ENCODE measurements at regions of chr2 and their contacts with region 1.

Region 1: GRCh38 chr2:207625018-207625907 is at the start of gene METTL21A:
- DNase-seq: peak; percentile 75 to 92 (median 86)
- H3K4me3 ChIP-seq: peak within 1 kb of the TSS; percentile 68 to 99 (median 92)
- H3K27ac ChIP-seq: peak within 1 kb of the TSS; percentile 49 to 99 (median 94)
- H3K27me3 ChIP-seq: no peaks in the 10 kb centered on the region
- CTCF ChIP-seq: peak in 51 of 56 donors; percentile 14 to 73 (median 45)
- total RNA-seq, gene METTL21A: 11.8 to 34.3 (median 18.4) TPM

Region 2: DNA sequence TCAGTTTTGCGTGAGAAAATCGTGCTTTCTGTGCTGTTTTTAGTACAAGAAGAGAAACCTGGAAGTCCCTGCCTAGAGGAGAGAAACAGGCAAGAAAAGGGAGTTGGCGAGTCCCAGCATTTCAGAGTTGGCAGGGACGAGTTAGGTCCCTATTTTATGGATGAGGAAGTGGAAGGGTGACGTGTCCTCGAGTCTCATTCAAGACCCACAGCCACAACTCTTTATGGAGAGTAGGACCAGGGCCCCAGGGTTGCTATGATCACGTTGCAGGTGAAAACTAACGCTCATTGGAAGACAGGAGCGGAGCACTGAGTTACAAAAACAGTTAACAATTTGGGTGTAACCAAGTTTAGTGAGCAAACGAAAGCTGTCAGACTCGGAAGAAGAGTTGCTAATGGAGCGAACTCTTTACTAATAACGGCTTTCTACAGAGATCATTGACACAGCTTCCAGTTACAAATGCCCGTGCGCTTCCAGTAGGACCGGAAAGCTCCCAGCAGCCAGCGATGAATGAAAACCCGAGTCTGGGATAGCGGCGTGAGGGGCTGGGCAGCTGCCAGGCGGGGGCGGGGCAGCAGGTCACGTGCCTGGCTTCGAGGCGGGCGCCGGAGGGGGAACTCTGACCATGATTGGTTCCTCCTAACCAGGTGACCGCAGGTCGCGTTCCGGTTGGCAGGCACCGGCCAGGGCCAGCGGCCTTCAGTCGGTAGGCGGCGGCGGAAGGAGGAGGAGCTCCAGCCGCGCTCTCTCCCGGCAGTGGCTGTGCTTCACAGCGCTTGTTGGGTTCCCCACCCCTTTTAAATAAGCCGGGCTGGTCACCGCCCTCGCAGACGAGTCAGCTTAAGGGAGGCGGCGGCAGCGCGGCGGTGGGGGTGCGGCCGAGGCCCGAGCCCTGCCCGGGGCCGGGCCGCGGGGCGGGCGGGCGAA is 85.8 kb after region 1 on chr2 and contains the start of gene CCNYL1:
- intact Hi-C with region 1: loop called (anchors 2 kb)
- DNase-seq: peak; percentile 98 to 99 (median 99)
- H3K4me3 ChIP-seq: peak within 1 kb of the TSS; percentile 65 to 98 (median 91)
- H3K27ac ChIP-seq: peak within 1 kb of the TSS in 56 of 59 donors; percentile 39 to 93 (median 82)
- H3K27me3 ChIP-seq: no peaks in the 10 kb centered on the region
- CTCF ChIP-seq: peak in 48 of 56 donors; percentile 13 to 66 (median 41)
- total RNA-seq, gene CCNYL1: 9.6 to 27.4 (median 16.3) TPM

Region 3: DNA sequence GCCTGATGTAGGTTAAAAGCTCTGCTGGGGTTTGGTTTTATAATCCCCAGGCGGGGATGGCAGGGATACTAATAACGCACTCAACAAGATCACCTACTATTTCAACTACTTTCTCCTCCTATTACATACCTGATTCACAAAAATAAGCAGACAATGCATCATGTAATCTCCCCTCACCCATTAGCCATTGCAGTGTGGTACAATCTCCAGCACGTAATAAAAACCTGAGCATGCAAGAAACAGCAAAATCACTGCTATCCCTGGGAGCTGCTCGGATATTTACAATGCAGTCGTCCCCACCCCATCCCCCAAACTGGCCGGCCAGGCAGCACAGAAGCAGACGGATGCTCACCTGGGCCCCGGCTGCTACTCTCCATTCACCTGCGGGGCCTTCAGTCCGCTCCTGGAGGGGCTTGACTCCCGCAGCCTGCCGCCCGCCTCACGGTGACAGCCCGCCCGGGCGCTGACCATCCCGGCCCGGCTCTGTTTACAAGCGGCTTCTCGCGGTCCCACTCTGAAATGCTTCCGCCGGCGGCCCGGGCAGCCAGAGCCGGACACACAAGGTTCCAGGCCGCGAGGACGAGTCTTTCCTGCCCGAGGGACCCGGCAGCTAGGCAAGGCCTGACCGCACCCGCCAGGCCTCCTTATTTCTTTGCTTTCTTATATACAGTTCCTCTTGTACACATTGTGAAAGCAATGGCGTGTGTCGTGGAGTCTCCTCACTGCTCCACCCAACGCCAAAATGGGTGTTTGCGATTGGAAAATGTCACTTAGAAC is 400.0 kb after region 1 on chr2 and contains the start of gene PLEKHM3:
- intact Hi-C with region 1: loop called (anchors 5 to 10 kb)
- DNase-seq: peak; percentile 84 to 93 (median 89)
- H3K4me3 ChIP-seq: peak within 1 kb of the TSS; percentile 61 to 98 (median 88)
- H3K27ac ChIP-seq: peak within 1 kb of the TSS; percentile 43 to 97 (median 88)
- H3K27me3 ChIP-seq: no peaks in the 10 kb centered on the region
- CTCF ChIP-seq: peak in 39 of 56 donors; percentile 3 to 61 (median 33)
- total RNA-seq, gene PLEKHM3: 42.7 to 92.0 (median 63.2) TPM

Region 4: GRCh38 chr2:208072250-208072892 is 447.1 kb after region 1 on chr2:
- intact Hi-C with region 1: loop called in 1 of 2 experiments (anchors 10 kb)
- DNase-seq: peak in 9 of 10 donors; percentile 49 to 84 (median 68)
- H3K4me3 ChIP-seq: no peak overlapping the region
- H3K27ac ChIP-seq: no peak overlapping the region
- H3K27me3 ChIP-seq: no peaks in the 10 kb centered on the region
- CTCF ChIP-seq: peak; percentile 66 to 92 (median 80)

Region 5: GRCh38 chr2:208265801-208266552 is 640.7 kb after region 1 on chr2 and contains the start of gene PIKFYVE:
- intact Hi-C with region 1: loop called (anchors 2 to 10 kb)
- DNase-seq: peak; percentile 96 to 99 (median 98)
- H3K4me3 ChIP-seq: peak within 1 kb of the TSS; percentile 79 to 100 (median 96)
- H3K27ac ChIP-seq: peak within 1 kb of the TSS; percentile 56 to 98 (median 91)
- H3K27me3 ChIP-seq: no peaks in the 10 kb centered on the region
- CTCF ChIP-seq: peak in 31 of 56 donors; percentile 5 to 55 (median 19)
- total RNA-seq, gene PIKFYVE: 45.3 to 68.9 (median 55.6) TPM

Measured in dorsolateral prefrontal cortex (tissue), 120 donors.